HepG2 (cell line): ENCODE measurements at regions of chr17 and their contacts with region 1.

Region 1: GRCh38 chr17:29760761-29761696 is 138.3 kb upstream of the CORO6 start:
- DNase-seq: peak; percentile 60
- ATAC-seq: peak; percentile 97
- H3K4me3 ChIP-seq: peak overlapping the region; percentile 61 to 77 (median 76)
- H3K27ac ChIP-seq: peak overlapping the region; percentile 64
- H3K4me1 ChIP-seq: peaks cover 14% of the 10 kb centered on the region
- H3K27me3 ChIP-seq: no peaks in the 10 kb centered on the region
- CTCF ChIP-seq: no peak; the same call in 1 of the 2 replicates
- EP300 ChIP-seq: no peak
- POLR2A ChIP-seq: peak in 1 of 2 experiments; percentile 55; a peak in 2 of 4 replicates
- RAD21 ChIP-seq: peak; percentile 52

Region 2: GRCh38 chr17:29622337-29623282 is 138.4 kb before region 1 on chr17 and contains the start of gene CORO6:
- CTCF ChIA-PET with region 1: no interaction called
- POLR2A ChIA-PET with region 1: no interaction called
- in situ Hi-C with region 1: no loop called
- intact Hi-C with region 1: loop called (anchors 5 kb)
- DNase-seq: no peak
- ATAC-seq: peak; percentile 58
- H3K4me3 ChIP-seq: peak within 1 kb of the TSS; percentile 70 to 77 (median 75)
- H3K27ac ChIP-seq: no peak within 1 kb of the TSS
- H3K4me1 ChIP-seq: peaks cover 45% of the 10 kb centered on the region
- H3K27me3 ChIP-seq: peaks cover 4 to 41% of the 10 kb centered on the region in 2 experiments; a peak in 4 of 5 replicates
- CTCF ChIP-seq: no peak
- EP300 ChIP-seq: no peak
- POLR2A ChIP-seq: no peak
- RAD21 ChIP-seq: 0 out of 2 replicates have a peak, but pooled peaks have one; percentile 12
- total RNA-seq, gene CORO6: 0.42 TPM in 1 of 2 replicates, not detected in the other

Region 3: DNA sequence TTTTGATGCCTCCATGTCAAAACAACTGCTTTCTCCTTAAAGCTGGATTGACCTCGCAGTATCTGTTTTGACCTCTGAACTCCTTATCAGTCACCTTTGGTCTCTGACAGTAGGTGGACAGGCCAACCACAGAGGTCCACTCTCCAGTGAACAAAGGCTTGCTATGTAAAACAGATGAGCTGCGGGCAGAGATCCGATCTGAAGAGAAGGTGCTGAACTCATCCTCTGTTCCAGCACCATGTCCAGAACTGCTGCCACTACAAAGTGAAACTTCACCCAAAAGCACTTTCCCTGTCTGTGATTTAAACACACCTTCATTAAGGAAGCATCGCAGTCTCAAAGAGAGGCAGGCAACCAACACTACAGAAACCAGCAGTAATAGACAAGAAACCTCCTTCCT is 21.0 kb before region 1 on chr17:
- CTCF ChIA-PET with region 1: no interaction called
- POLR2A ChIA-PET with region 1: interaction called, 12 read pairs
- in situ Hi-C with region 1: no loop called
- intact Hi-C with region 1: no loop called
- DNase-seq: peak; percentile 90
- ATAC-seq: peak; percentile 94
- H3K4me3 ChIP-seq: peak overlapping the region in 1 of 3 experiments; percentile 5; a peak in 1 of 6 replicates
- H3K27ac ChIP-seq: peak overlapping the region; percentile 65
- H3K4me1 ChIP-seq: peaks cover 72% of the 10 kb centered on the region
- H3K27me3 ChIP-seq: no peaks in the 10 kb centered on the region
- CTCF ChIP-seq: no peak
- EP300 ChIP-seq: peak in 1 of 2 experiments; percentile 77; a peak in 2 of 4 replicates
- POLR2A ChIP-seq: no peak
- RAD21 ChIP-seq: no peak